Heart left ventricle (tissue), 16 donors: ENCODE measurements at regions of chr1 and their contacts with region 1.

Region 1: DNA sequence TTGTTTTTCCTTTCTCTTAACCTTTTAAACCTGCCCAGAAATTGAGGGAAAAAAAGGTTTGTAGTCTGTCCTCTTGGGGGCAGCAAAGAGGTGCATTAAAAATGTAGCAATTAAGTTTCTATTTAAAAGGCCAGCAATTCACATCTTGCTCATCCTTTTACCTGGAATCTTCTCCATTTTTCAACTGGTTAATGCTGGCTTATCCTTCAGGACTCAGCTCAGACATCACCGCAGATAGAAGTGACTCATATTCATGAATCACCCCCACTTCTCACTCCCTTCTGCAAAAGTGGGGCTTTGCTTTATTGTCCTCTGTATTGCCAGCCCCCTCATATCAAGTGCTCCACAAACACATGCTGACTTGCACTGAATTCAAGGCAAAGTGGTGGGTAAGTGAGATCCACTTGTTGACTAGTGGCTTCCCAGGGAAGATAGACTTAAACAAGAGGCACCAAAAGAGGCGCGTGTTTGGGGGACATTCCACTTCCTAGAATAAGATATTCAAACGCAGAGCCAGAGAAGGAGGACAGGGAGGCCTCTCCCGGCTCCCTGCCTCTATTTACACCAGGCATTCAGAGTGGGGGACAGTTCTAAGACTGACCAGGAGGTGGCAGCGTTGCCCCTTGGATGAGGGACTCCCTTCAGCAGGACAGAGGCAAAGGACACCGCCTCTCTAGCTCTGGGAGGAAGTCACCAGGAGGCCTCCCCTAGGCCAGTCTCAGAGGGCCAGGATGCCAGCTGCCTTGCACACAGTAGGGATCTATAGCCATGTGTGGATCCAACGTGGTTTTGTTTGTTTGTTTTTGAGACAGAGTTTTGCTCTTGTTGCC is 23.2 kb upstream of the ZNF648 start:
- DNase-seq: peak; percentile 81 to 87 (median 82)
- ATAC-seq: peak; percentile 83 to 97 (median 94)
- H3K4me3 ChIP-seq: no peak overlapping the region
- H3K27ac ChIP-seq: no peak overlapping the region
- H3K4me1 ChIP-seq: peaks cover 0 to 14% (median 1%) of the 10 kb centered on the region in 12 donors
- H3K27me3 ChIP-seq: no peaks in the 10 kb centered on the region
- CTCF ChIP-seq: peak; percentile 77 to 89 (median 81)
- POLR2A ChIP-seq: no peak

Region 2: GRCh38 chr1:181479137-181479745 is 605.5 kb before region 1 on chr1:
- intact Hi-C with region 1: loop called in 5 of 10 experiments (anchors 2 to 10 kb)
- DNase-seq: peak in 4 of 5 donors; percentile 24 to 41 (median 37)
- ATAC-seq: peak; percentile 74 to 94 (median 90)
- H3K4me3 ChIP-seq: no peak overlapping the region
- H3K27ac ChIP-seq: no peak overlapping the region
- H3K4me1 ChIP-seq: peaks cover 0 to 14% (median 1%) of the 10 kb centered on the region in 12 donors
- H3K27me3 ChIP-seq: peaks cover 24 to 86% (median 45%) of the 10 kb centered on the region in 9 donors
- CTCF ChIP-seq: peak; percentile 61 to 87 (median 78)
- POLR2A ChIP-seq: no peak

Region 3: GRCh38 chr1:182397771-182398393 is 313.2 kb after region 1 on chr1:
- intact Hi-C with region 1: loop called (anchors 1 to 2 kb)
- DNase-seq: no peak
- ATAC-seq: no peak
- H3K4me3 ChIP-seq: no peak overlapping the region
- H3K27ac ChIP-seq: no peak overlapping the region
- H3K4me1 ChIP-seq: peaks cover 0 to 38% (median 11%) of the 10 kb centered on the region in 12 donors
- H3K27me3 ChIP-seq: no peaks in the 10 kb centered on the region
- CTCF ChIP-seq: no peak
- POLR2A ChIP-seq: no peak

Region 4: DNA sequence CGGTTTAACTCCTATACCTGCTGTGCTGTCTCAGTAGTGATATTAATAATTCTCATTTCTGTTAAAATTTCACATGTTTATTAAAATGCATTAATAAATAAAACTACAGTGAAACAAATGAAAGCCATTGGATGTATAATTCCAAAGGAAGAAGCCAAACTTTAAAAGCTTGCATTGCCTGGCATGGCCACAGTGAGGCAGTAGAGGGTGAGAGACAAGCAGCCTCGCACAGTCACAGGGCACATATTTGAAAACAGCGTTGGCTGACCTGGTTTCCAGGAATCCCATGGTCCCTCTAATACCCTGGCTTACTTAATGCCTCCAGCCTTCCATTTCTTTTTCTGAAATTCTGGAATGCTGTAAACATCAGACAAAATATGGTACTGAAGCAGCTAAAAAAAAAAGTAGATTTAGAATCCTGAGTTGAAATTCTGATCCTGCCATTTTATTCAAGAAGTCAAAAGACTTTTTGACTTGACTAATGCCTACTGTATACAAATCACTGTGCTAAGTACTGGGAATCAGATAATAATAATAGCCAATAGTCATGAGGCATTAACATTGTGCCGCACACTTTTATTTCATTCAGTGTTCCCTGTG is 511.0 kb after region 1 on chr1:
- intact Hi-C with region 1: loop called in 8 of 10 experiments (anchors 5 to 10 kb)
- DNase-seq: peak; percentile 56 to 75 (median 68)
- ATAC-seq: peak in 3 of 4 donors; percentile 74 to 84 (median 76)
- H3K4me3 ChIP-seq: no peak overlapping the region
- H3K27ac ChIP-seq: no peak overlapping the region
- H3K4me1 ChIP-seq: peaks cover 0 to 42% (median 3%) of the 10 kb centered on the region in 12 donors
- H3K27me3 ChIP-seq: no peaks in the 10 kb centered on the region
- CTCF ChIP-seq: peak; percentile 81 to 93 (median 90)
- POLR2A ChIP-seq: no peak

Region 5: GRCh38 chr1:182781841-182782586 is 697.3 kb after region 1 on chr1:
- intact Hi-C with region 1: loop called in 9 of 10 experiments (anchors 2 to 10 kb)
- DNase-seq: peak; percentile 69 to 83 (median 78)
- ATAC-seq: peak in 3 of 4 donors; percentile 80 to 87 (median 82)
- H3K4me3 ChIP-seq: no peak overlapping the region
- H3K27ac ChIP-seq: no peak overlapping the region
- H3K4me1 ChIP-seq: peaks cover 0 to 13% (median under 1%) of the 10 kb centered on the region in 12 donors
- H3K27me3 ChIP-seq: no peaks in the 10 kb centered on the region
- CTCF ChIP-seq: peak; percentile 64 to 85 (median 79)
- POLR2A ChIP-seq: no peak